ENCODE measurements at regions of chr11 and their contacts with region 1.

Region 1: DNA sequence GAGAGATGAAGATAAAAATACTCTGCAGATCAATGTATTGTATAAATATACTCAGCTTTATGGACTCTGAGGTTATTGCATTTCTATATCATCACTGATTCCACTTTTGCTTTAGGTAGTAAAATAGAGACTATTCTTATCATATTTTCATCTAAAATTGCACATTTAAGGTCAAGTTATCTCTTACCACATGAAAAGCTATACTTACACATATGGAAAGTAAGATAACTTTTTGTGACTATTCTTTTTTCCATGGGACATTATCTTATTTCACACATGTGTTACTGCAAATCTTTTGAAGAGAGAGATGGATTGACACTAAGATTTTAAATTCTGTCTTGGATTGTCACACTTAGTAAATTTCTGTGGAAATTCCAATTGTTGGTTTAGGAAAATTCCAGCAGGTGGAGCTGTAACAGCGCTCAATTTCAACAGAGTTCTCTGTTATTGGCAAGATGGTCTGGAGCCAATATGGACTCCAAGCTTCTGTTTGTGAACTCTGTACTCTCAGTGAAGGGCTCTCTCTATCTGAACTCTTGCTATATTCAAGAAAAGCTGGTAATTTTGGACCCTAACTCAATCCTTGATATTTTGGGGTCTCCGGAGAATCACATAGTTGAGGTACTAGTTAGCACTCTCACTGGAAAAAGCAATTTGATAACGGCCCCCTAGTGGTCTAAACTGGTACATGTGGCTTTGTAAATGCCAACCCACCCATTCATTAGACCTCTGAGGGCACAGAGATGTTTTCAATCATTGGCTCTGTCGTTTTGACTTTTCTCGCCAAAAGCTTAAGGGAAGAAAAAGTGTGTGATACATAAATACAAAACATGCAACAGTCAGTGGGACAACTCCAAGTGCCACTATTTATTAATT is 429.7 kb downstream of the ETS1 start:
- DNase-seq: peak in 34 of 35 experiments; percentile 1 to 84 (median 42)
- ATAC-seq: peak; percentile 87 to 93 (median 88)
- H3K4me3 ChIP-seq: peak overlapping the region; percentile 25 to 32
- H3K4me3 Mint-ChIP-seq: peak overlapping the region; percentile 51 to 76 (median 59)
- H3K27ac ChIP-seq: no peak overlapping the region
- H3K27ac Mint-ChIP-seq: peak overlapping the region; percentile 65 to 75
- H3K4me1 ChIP-seq: no peaks in the 10 kb centered on the region
- H3K4me1 Mint-ChIP-seq: peaks cover 0 to 9% (median 3%) of the 10 kb centered on the region in 3 donors
- H3K27me3 ChIP-seq: no peaks in the 10 kb centered on the region
- H3K27me3 Mint-ChIP-seq: no peaks in the 10 kb centered on the region

Region 2: DNA sequence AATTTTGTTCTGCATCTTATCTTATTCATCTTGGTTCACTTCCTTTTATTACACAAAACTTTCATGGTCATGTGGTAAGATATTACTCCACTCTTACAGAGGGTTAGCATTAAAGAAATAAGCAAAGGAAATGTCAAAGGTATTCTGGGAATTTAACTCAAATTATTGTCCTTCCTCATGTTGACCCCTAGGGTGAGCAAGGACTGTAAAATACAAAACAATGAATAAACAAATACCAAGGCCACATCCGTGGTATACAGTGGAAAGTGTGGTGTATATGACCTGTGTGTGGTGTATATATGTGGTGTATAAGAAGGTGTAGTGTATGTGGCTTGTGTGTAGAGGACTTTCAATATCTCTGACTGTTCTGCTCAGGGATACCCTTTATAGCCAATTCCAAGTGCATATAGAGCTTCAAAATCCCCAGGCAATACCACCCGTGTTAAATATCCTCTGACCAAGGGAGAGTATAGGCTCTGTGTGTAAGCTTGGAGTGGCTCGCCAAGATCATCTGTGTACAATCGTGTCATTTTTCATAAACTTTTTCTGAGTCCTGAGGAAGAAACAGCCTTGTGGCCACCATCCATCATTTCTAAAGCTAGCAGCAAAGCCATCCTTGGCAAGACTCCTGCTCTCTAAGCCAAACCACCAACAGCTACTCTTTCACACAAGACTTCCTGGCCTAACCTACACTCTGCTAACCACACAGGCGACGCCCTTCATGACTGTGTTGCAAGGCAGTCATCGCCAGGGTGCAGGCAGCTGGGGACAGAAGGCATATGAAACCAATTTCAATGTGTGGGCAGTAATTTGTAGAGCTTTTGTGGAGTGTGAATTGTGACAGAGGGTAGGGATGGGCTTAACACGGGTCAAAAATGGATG is 118.3 kb before region 1 on chr11:
- CTCF ChIA-PET with region 1: interaction called, 6 to 62 read pairs
- POLR2A ChIA-PET with region 1: interaction called in 1 of 2 experiments, 3 read pairs
- DNase-seq: peak; percentile 58 to 89 (median 73)
- ATAC-seq: peak; percentile 96 to 98 (median 98)
- H3K4me3 ChIP-seq: peak overlapping the region; percentile 18 to 40
- H3K4me3 Mint-ChIP-seq: peak overlapping the region in 2 of 3 donors; percentile 57 to 70
- H3K27ac ChIP-seq: peak overlapping the region; percentile 74
- H3K27ac Mint-ChIP-seq: peak overlapping the region in 1 of 2 donors; percentile 93
- H3K4me1 ChIP-seq: peaks cover 53 to 59% of the 10 kb centered on the region in 2 experiments
- H3K4me1 Mint-ChIP-seq: peaks cover 34 to 49% (median 35%) of the 10 kb centered on the region in 3 donors
- H3K27me3 ChIP-seq: no peaks in the 10 kb centered on the region
- H3K27me3 Mint-ChIP-seq: no peaks in the 10 kb centered on the region

Region 3: DNA sequence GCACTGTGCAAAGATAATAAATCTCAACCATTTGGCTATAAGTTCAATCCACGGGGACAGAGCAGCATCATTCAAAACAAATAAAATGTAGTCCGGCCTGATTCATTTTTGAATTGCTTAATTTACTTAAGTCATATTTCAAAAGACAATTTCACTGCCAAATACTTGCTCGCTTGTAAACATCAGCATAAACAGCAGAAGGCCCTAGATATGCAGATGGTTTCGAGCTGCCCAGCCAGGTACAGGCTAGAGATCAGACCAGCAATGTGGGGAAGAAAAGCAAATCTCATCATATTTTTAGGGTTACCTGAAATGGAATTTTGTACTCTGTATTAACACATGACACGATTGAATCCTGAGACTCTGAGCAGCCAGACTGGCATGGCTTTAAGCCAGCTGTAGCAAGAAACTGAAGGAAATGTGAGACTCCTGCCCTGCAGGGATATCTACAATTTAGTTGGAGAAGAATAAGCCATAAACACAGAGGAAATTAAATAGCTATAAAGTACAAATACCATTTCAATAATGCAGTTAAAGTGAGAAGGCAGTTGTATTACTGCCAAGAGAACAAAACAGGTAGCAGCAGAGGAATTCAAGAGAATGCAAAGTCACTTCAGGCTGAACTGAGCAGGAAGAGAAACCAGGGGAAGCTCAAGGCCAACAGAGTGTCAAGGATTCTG is 10.6 kb before region 1 on chr11:
- CTCF ChIA-PET with region 1: interaction called, 5 to 15 read pairs
- POLR2A ChIA-PET with region 1: interaction called in 1 of 2 experiments, 3 read pairs
- DNase-seq: no peak
- ATAC-seq: no peak
- H3K4me3 ChIP-seq: no peak overlapping the region
- H3K4me3 Mint-ChIP-seq: no peak overlapping the region
- H3K27ac ChIP-seq: no peak overlapping the region
- H3K27ac Mint-ChIP-seq: no peak overlapping the region
- H3K4me1 ChIP-seq: no peaks in the 10 kb centered on the region
- H3K4me1 Mint-ChIP-seq: peaks cover 0 to 2% (median 0%) of the 10 kb centered on the region in 3 donors
- H3K27me3 ChIP-seq: peaks cover 0 to 4% of the 10 kb centered on the region in 2 experiments
- H3K27me3 Mint-ChIP-seq: no peaks in the 10 kb centered on the region

Region 4: GRCh38 chr11:128522055-128522942 is 364.6 kb after region 1 on chr11:
- CTCF ChIA-PET with region 1: interaction called in 1 of 2 experiments, 10 read pairs
- POLR2A ChIA-PET with region 1: no interaction called
- DNase-seq: peak; percentile 70 to 93 (median 80)
- ATAC-seq: peak; percentile 76 to 82 (median 80)
- H3K4me3 ChIP-seq: peak overlapping the region; percentile 68 to 99
- H3K4me3 Mint-ChIP-seq: peak overlapping the region; percentile 96 to 99 (median 98)
- H3K27ac ChIP-seq: peak overlapping the region; percentile 93
- H3K27ac Mint-ChIP-seq: peak overlapping the region; percentile 98
- H3K4me1 ChIP-seq: peaks cover 37 to 40% of the 10 kb centered on the region in 2 experiments
- H3K4me1 Mint-ChIP-seq: peaks cover 45 to 65% (median 50%) of the 10 kb centered on the region in 3 donors
- H3K27me3 ChIP-seq: no peaks in the 10 kb centered on the region
- H3K27me3 Mint-ChIP-seq: no peaks in the 10 kb centered on the region

Region 5: DNA sequence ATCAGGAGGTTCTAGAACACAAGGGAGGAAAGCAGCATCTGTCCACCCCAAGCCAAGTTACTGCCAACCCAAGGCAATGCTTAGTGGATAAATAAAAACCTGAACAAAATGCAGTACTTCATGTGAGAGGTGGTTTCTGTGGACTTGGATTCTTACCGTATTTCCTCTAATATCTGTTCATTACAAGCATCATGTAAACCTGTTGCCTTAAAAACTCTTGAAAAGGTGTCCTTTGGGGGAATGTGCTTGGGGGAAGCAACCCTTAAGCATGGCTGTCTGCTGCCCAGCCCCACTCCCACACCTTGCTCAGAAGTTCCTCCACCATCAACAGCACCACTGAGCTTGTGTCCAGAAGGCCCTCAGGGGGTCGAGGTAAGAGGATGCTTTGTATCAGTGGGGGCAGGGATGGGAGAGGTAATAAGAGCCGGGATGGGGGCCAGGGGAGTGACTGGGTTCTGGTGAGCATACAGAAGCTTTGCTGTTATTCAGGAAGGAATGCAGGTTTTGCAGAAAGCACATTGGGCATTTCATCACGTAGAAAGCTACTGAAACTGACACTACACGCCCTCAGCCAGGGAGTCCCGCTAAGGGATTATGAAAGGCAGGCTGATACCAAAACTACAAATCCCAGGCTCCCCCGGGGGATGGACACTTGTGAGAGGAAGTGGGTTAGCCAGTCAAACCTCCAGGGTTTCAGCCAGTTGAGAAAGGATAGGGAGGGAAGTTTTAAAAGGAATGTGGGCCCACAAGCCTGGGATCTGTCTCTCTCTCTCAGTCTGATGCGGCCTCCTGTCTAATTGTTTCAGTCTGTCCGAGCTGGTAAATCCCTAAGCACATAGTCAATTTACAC is 657.4 kb after region 1 on chr11:
- CTCF ChIA-PET with region 1: interaction called, 3 to 11 read pairs
- POLR2A ChIA-PET with region 1: no interaction called
- DNase-seq: peak in 1 of 35 experiments; percentile 8
- ATAC-seq: no peak
- H3K4me3 ChIP-seq: no peak overlapping the region
- H3K4me3 Mint-ChIP-seq: no peak overlapping the region
- H3K27ac ChIP-seq: no peak overlapping the region
- H3K27ac Mint-ChIP-seq: no peak overlapping the region
- H3K4me1 ChIP-seq: no peaks in the 10 kb centered on the region
- H3K4me1 Mint-ChIP-seq: peaks cover 0 to 1% (median 0%) of the 10 kb centered on the region in 3 donors
- H3K27me3 ChIP-seq: no peaks in the 10 kb centered on the region
- H3K27me3 Mint-ChIP-seq: no peaks in the 10 kb centered on the region

Region 6: GRCh38 chr11:128841461-128842072 is 683.9 kb after region 1 on chr11:
- CTCF ChIA-PET with region 1: interaction called, 6 to 10 read pairs
- POLR2A ChIA-PET with region 1: no interaction called
- DNase-seq: peak in 1 of 35 experiments; percentile 33
- ATAC-seq: peak in 1 of 4 experiments; percentile 20
- H3K4me3 ChIP-seq: no peak overlapping the region
- H3K4me3 Mint-ChIP-seq: no peak overlapping the region
- H3K27ac ChIP-seq: peak overlapping the region; percentile 26
- H3K27ac Mint-ChIP-seq: peak overlapping the region; percentile 49 to 87
- H3K4me1 ChIP-seq: peaks cover 33 to 46% of the 10 kb centered on the region in 2 experiments
- H3K4me1 Mint-ChIP-seq: peaks cover 84 to 99% (median 85%) of the 10 kb centered on the region in 3 donors
- H3K27me3 ChIP-seq: no peaks in the 10 kb centered on the region
- H3K27me3 Mint-ChIP-seq: no peaks in the 10 kb centered on the region

Measured in T-cell (primary cell).